PC-3 (cell line): ENCODE measurements at regions of chr4 and their contacts with region 1.

Region 1: GRCh38 chr4:114378306-114378903 is 220.2 kb upstream of the UGT8 start:
- DNase-seq: peak; percentile 54
- ATAC-seq: peak; percentile 51
- H3K4me3 ChIP-seq: no peak overlapping the region
- H3K27ac ChIP-seq: no peak overlapping the region
- H3K4me1 ChIP-seq: peaks cover 4% of the 10 kb centered on the region; the same call in 1 of the 2 replicates
- H3K27me3 ChIP-seq: no peaks in the 10 kb centered on the region
- CTCF ChIP-seq: peak; percentile 67

Region 2: GRCh38 chr4:113781439-113782040 is 596.9 kb before region 1 on chr4:
- CTCF ChIA-PET with region 1: no interaction called
- POLR2A ChIA-PET with region 1: no interaction called
- intact Hi-C with region 1: loop called (anchors 5 kb)
- DNase-seq: peak; percentile 63
- ATAC-seq: no peak
- H3K4me3 ChIP-seq: no peak overlapping the region
- H3K27ac ChIP-seq: no peak overlapping the region
- H3K4me1 ChIP-seq: peaks cover 18% of the 10 kb centered on the region
- H3K27me3 ChIP-seq: no peaks in the 10 kb centered on the region
- CTCF ChIP-seq: peak; percentile 72

Region 3: GRCh38 chr4:113952452-113953029 is 425.9 kb before region 1 on chr4:
- CTCF ChIA-PET with region 1: no interaction called
- POLR2A ChIA-PET with region 1: no interaction called
- intact Hi-C with region 1: loop called (anchors 1 kb)
- DNase-seq: peak; percentile 74
- ATAC-seq: peak; percentile 81
- H3K4me3 ChIP-seq: no peak overlapping the region
- H3K27ac ChIP-seq: no peak overlapping the region
- H3K4me1 ChIP-seq: peaks cover 24% of the 10 kb centered on the region
- H3K27me3 ChIP-seq: no peaks in the 10 kb centered on the region
- CTCF ChIP-seq: peak; percentile 87

Region 4: GRCh38 chr4:114005569-114006442 is 372.6 kb before region 1 on chr4:
- CTCF ChIA-PET with region 1: no interaction called
- POLR2A ChIA-PET with region 1: no interaction called
- intact Hi-C with region 1: loop called (anchors 1 kb)
- DNase-seq: peak; percentile 80
- ATAC-seq: peak; percentile 95
- H3K4me3 ChIP-seq: no peak overlapping the region
- H3K27ac ChIP-seq: peak overlapping the region; percentile 75
- H3K4me1 ChIP-seq: peaks cover 19% of the 10 kb centered on the region
- H3K27me3 ChIP-seq: no peaks in the 10 kb centered on the region
- CTCF ChIP-seq: no peak

Region 5: GRCh38 chr4:114208574-114209151 is 169.7 kb before region 1 on chr4:
- CTCF ChIA-PET with region 1: no interaction called
- POLR2A ChIA-PET with region 1: no interaction called
- intact Hi-C with region 1: loop called (anchors 5 kb)
- DNase-seq: peak; percentile 12
- ATAC-seq: no peak
- H3K4me3 ChIP-seq: no peak overlapping the region
- H3K27ac ChIP-seq: no peak overlapping the region
- H3K4me1 ChIP-seq: no peaks in the 10 kb centered on the region
- H3K27me3 ChIP-seq: no peaks in the 10 kb centered on the region
- CTCF ChIP-seq: peak; percentile 27; the same call in 1 of the 2 replicates

Region 6: DNA sequence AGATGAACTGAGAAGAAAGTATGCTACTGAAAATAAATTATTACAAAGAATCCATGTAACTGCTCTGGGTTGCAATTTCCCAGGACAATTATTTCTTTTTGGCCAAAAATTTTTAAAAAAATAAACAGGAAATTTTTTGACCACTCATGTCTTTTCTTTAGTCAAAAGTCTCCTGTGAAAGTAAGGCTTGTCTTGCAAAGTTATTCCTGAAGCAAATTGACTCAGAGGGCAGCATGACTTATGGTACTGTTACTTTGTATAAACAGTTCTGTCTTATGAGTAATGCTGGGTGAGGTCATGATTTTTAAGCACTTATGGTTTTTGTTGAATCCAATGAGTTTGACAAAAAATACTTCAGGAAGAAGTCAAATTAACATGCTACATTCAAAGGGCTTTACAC is 106.2 kb before region 1 on chr4:
- CTCF ChIA-PET with region 1: no interaction called
- POLR2A ChIA-PET with region 1: no interaction called
- intact Hi-C with region 1: loop called (anchors 10 kb)
- DNase-seq: peak; percentile 83
- ATAC-seq: peak; percentile 95
- H3K4me3 ChIP-seq: no peak overlapping the region
- H3K27ac ChIP-seq: peak overlapping the region; percentile 69
- H3K4me1 ChIP-seq: peaks cover 24% of the 10 kb centered on the region
- H3K27me3 ChIP-seq: no peaks in the 10 kb centered on the region
- CTCF ChIP-seq: no peak